Activated CD8-positive, alpha-beta T cell treated with anti-CD3 and anti-CD28 coated beads, Interleukin-2, amount 10 ng/mL, durations not matched to agents 7 days and 5 days (primary cell): ENCODE measurements at regions of chr15 and their contacts with region 1.

Region 1: GRCh38 chr15:90221246-90221900 is 12.4 kb downstream of the CIB1 start:
- DNase-seq: peak; percentile 52
- ATAC-seq: peak; percentile 43
- H3K4me3 Mint-ChIP-seq: no peak overlapping the region
- H3K27ac Mint-ChIP-seq: no peak overlapping the region
- H3K4me1 Mint-ChIP-seq: peaks cover 20% of the 10 kb centered on the region
- H3K27me3 Mint-ChIP-seq: no peaks in the 10 kb centered on the region

Region 2: GRCh38 chr15:90126457-90127435 is 94.6 kb before region 1 on chr15:
- CTCF ChIA-PET with region 1: no interaction called
- POLR2A ChIA-PET with region 1: no interaction called
- DNase-seq: no peak
- ATAC-seq: no peak
- H3K4me3 Mint-ChIP-seq: no peak overlapping the region
- H3K27ac Mint-ChIP-seq: no peak overlapping the region
- H3K4me1 Mint-ChIP-seq: no peaks in the 10 kb centered on the region
- H3K27me3 Mint-ChIP-seq: peaks cover 5% of the 10 kb centered on the region

Region 3: GRCh38 chr15:90201130-90201949 is 20.0 kb before region 1 on chr15 and contains the start of gene SEMA4B:
- CTCF ChIA-PET with region 1: interaction called, 19 read pairs
- POLR2A ChIA-PET with region 1: interaction called, 4 read pairs
- DNase-seq: peak; percentile 78
- ATAC-seq: peak; percentile 93
- H3K4me3 Mint-ChIP-seq: peak within 1 kb of the TSS; percentile 80
- H3K27ac Mint-ChIP-seq: peak within 1 kb of the TSS; percentile 80
- H3K4me1 Mint-ChIP-seq: peaks cover 26% of the 10 kb centered on the region
- H3K27me3 Mint-ChIP-seq: peaks cover 4% of the 10 kb centered on the region
- total RNA-seq, gene SEMA4B: 8.6 to 11.2 TPM

Region 4: GRCh38 chr15:90241343-90242192 is 20.2 kb after region 1 on chr15:
- CTCF ChIA-PET with region 1: no interaction called
- POLR2A ChIA-PET with region 1: no interaction called
- DNase-seq: no peak
- ATAC-seq: no peak
- H3K4me3 Mint-ChIP-seq: no peak overlapping the region
- H3K27ac Mint-ChIP-seq: no peak overlapping the region
- H3K4me1 Mint-ChIP-seq: peaks cover 9% of the 10 kb centered on the region
- H3K27me3 Mint-ChIP-seq: no peaks in the 10 kb centered on the region